CD8-positive, alpha-beta memory T cell (primary cell): ENCODE measurements at regions of chr12 and their contacts with region 1.

Region 1: DNA sequence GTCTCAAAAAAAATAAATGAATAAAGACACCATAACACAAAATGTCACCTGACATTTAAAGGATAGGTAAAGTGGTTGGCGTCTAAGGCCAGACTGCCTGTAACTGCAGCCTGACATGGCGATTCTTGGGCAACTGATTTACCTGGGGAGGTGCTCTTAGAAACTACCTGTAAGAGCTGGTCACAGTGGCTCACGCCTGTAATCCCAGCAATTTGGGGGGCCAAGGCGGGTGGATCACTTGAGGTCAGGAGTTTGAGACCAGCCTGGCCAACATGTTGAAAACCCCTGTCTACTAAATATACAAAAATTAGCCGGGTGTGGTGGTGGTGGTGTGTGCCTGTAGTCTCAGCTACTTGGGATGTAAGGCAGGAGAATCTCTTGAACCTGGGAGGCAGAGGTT is 8.4 kb downstream of the RPL6 start:
- DNase-seq: no peak
- H3K4me3 ChIP-seq: no peak overlapping the region
- H3K4me3 Mint-ChIP-seq: no peak overlapping the region
- H3K27ac ChIP-seq: no peak overlapping the region
- H3K27ac Mint-ChIP-seq: no peak overlapping the region
- H3K4me1 ChIP-seq: no peaks in the 10 kb centered on the region
- H3K4me1 Mint-ChIP-seq: peaks cover 0 to 7% (median 3%) of the 10 kb centered on the region in 3 donors
- H3K27me3 ChIP-seq: no peaks in the 10 kb centered on the region
- H3K27me3 Mint-ChIP-seq: peaks cover 0 to 4% of the 10 kb centered on the region in 2 donors

Region 2: DNA sequence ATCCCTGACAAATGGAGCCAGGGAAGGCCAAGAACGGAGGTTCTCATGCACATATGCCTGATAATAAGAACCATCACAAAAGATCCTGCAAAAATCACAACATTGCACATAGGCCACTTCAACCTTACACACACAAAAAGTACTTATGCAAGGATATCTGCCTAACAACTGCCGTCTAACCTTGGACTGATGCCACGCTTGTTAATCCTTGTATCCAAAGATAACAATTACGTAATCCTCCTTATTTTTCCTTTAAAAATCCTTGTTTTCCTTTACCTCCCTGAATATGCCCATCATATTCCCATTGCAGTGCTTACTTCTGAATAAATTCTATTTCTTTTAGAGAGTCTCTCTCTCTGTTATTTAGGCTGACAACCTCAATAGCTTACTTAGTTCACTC is 447.6 kb before region 1 on chr12:
- CTCF ChIA-PET with region 1: no interaction called
- POLR2A ChIA-PET with region 1: interaction called, 11 read pairs
- DNase-seq: no peak
- H3K4me3 ChIP-seq: no peak overlapping the region
- H3K4me3 Mint-ChIP-seq: no peak overlapping the region
- H3K27ac ChIP-seq: no peak overlapping the region
- H3K27ac Mint-ChIP-seq: peak overlapping the region in 1 of 8 donors; percentile 79
- H3K4me1 ChIP-seq: peaks cover 12% of the 10 kb centered on the region
- H3K4me1 Mint-ChIP-seq: peaks cover 35 to 54% (median 43%) of the 10 kb centered on the region in 3 donors
- H3K27me3 ChIP-seq: no peaks in the 10 kb centered on the region
- H3K27me3 Mint-ChIP-seq: no peaks in the 10 kb centered on the region

Region 3: DNA sequence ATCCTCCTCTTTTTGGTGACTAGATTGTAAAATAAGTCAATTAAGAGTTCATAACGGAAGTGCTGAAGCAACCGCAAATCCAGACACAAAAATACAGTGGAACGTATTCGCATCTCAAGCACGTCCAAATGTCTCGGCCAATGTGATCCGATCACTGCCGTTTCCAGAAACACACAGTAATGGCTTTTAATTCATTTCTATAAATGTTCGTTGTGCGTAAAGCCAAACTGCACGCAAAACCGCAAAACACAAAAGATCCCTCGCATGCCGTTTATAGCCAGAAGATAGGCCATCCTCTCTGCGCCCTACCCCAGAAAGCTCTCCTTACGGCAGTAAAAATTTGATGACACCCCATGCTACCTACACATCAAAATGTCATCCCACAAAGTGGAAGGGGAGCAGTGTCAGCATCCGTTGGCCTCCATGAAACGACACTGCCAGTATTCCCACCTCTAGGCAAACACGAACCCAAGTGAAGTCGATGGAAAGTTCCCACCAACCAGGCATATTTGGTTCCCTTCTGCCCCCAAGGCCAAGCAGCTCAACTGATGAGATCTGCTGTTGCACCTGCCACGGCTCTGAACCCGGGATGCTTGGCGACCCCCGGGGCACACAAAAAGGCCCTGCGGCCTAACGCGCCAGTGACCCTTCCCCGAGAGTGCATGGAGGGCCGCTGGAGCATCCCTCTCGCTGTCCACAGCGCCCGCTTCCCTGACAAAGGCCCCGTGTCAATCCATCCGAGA is 20.2 kb before region 1 on chr12:
- CTCF ChIA-PET with region 1: no interaction called
- POLR2A ChIA-PET with region 1: no interaction called
- DNase-seq: no peak
- H3K4me3 ChIP-seq: peak overlapping the region; percentile 69
- H3K4me3 Mint-ChIP-seq: peak overlapping the region; percentile 89 to 100 (median 93)
- H3K27ac ChIP-seq: peak overlapping the region; percentile 57
- H3K27ac Mint-ChIP-seq: peak overlapping the region; percentile 86 to 95 (median 92)
- H3K4me1 ChIP-seq: peaks cover 16% of the 10 kb centered on the region
- H3K4me1 Mint-ChIP-seq: peaks cover 25 to 32% (median 25%) of the 10 kb centered on the region in 3 donors
- H3K27me3 ChIP-seq: no peaks in the 10 kb centered on the region
- H3K27me3 Mint-ChIP-seq: no peaks in the 10 kb centered on the region